Activated T-helper 1 cell treated with anti-CD3 and anti-CD28 coated beads, Interleukin-12 subunit alpha, Interleukin-12 subunit beta, Interleukin-2, Interleukin-4 antibody, amounts not matched to agents 30 ng/mL and 10 ng/mL and 1 ng/mL, durations not matched to agents 14 hours and 24 hours and 36 hours (primary cell): ENCODE measurements at regions of chr10 and their contacts with region 1.

Region 1: GRCh38 chr10:97869091-97870042 is 19.7 kb downstream of the GOLGA7B start:
- DNase-seq: peak; percentile 82
- H3K4me3 Mint-ChIP-seq: peak overlapping the region; percentile 33
- H3K27ac Mint-ChIP-seq: peak overlapping the region; percentile 40
- H3K4me1 Mint-ChIP-seq: peaks cover 16% of the 10 kb centered on the region
- H3K27me3 Mint-ChIP-seq: peaks cover 16% of the 10 kb centered on the region

Region 2: GRCh38 chr10:96306516-96306915 is 1562.9 kb before region 1 on chr10:
- intact Hi-C with region 1: no loop called
- DNase-seq: no peak
- H3K4me3 Mint-ChIP-seq: no peak overlapping the region
- H3K27ac Mint-ChIP-seq: no peak overlapping the region
- H3K4me1 Mint-ChIP-seq: no peaks in the 10 kb centered on the region
- H3K27me3 Mint-ChIP-seq: peaks cover 22% of the 10 kb centered on the region

Region 3: GRCh38 chr10:97701438-97702069 is 167.8 kb before region 1 on chr10:
- intact Hi-C with region 1: loop called (anchors 2 kb)
- DNase-seq: peak; percentile 34
- H3K4me3 Mint-ChIP-seq: no peak overlapping the region
- H3K27ac Mint-ChIP-seq: no peak overlapping the region
- H3K4me1 Mint-ChIP-seq: no peaks in the 10 kb centered on the region
- H3K27me3 Mint-ChIP-seq: peaks cover 8% of the 10 kb centered on the region

Region 4: GRCh38 chr10:97759158-97759887 is 110.0 kb before region 1 on chr10:
- intact Hi-C with region 1: loop called (anchors 1 kb)
- DNase-seq: peak; percentile 22
- H3K4me3 Mint-ChIP-seq: no peak overlapping the region
- H3K27ac Mint-ChIP-seq: no peak overlapping the region
- H3K4me1 Mint-ChIP-seq: no peaks in the 10 kb centered on the region
- H3K27me3 Mint-ChIP-seq: no peaks in the 10 kb centered on the region

Region 5: DNA sequence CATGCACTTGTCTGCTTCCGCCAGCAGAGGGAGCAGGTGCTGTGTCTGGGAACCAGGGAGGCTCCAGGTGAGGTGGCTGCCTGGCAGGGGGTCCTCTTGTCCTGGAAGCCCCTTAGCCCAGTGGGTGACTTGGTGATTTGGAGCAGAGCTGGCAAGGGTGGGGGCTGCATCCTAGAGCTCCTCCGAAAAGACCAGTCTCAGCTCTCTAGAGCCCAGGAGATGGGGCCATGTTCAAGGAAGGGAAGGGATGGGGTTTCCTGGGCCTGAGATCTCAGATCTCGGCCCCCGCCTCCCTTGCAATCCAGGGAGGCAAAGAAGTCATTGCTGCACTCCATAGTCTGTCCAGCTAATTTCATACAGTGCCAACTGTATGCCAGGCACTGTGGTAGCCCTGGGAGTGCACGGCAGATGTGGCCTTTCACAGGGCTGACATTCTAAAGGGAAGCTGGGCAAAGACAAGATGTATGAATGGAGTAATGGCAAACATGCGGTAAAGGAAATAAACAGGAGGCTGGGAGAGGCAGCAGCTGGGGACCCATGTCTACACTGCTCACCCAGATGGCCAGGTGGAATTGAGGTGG is 77.1 kb before region 1 on chr10:
- intact Hi-C with region 1: loop called (anchors 1 kb)
- DNase-seq: peak; percentile 56
- H3K4me3 Mint-ChIP-seq: no peak overlapping the region
- H3K27ac Mint-ChIP-seq: no peak overlapping the region
- H3K4me1 Mint-ChIP-seq: peaks cover 21% of the 10 kb centered on the region
- H3K27me3 Mint-ChIP-seq: peaks cover 9% of the 10 kb centered on the region